Ovary (tissue), 10 donors: ENCODE measurements at regions of chr2 and their contacts with region 1.

Region 1: DNA sequence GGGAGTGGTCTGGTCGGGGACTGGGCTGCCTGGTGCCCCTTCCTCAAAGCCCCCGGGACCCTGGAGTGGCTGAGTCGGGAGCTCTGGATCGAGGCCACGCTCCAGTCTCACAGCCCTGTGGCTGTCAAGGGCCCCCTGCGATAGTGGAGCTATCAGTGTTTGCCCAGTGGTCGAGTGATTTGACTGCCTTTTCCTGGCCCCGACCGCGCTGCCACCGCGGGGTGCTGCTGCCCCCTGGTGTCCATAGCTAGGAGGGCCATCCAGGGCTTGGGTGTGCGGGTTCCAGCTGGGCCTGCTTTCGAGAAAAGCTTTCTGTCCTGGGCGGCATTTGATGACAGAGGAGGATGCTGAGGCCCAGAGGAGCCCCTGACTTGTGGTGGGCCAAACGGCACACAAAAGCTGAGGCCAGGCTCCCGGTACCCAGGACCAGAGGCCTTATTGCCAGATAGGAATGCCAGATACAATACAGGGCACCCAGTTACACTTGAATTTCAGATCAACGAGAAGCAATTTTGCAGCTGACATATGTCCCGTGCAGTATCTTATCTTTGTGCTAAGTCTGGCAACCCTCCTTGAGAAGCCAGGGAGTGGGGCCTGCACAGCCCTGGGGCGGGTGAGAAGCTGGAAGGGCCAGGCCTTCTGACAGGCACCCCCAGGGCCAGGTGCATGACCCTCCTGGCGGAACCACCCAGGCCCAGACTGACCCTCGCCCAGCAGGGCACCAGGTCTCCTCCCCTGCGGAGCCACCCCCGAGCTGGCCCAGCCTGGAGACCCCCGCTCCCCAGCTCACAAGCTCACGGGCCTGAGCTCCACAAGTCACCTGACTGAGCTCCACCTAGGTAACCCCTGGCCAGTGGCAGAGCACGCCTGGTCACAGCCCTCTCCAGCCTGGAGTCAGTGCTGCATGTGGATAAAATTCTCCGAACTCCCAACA is 13.0 kb downstream of the ODC1 start:
- DNase-seq: peak; percentile 60 to 86 (median 75)
- H3K4me3 ChIP-seq: no peak overlapping the region
- H3K27ac ChIP-seq: no peak overlapping the region
- H3K4me1 ChIP-seq: no peaks in the 10 kb centered on the region
- H3K27me3 ChIP-seq: no peaks in the 10 kb centered on the region
- CTCF ChIP-seq: peak; percentile 78 to 92 (median 87)
- EP300 ChIP-seq: no peak
- POLR2A ChIP-seq: no peak

Region 2: GRCh38 chr2:10072656-10073480 is 362.3 kb before region 1 on chr2:
- intact Hi-C with region 1: loop called in 1 of 4 experiments (anchors 5 kb)
- DNase-seq: peak; percentile 84 to 87 (median 84)
- H3K4me3 ChIP-seq: no peak overlapping the region
- H3K27ac ChIP-seq: no peak overlapping the region
- H3K4me1 ChIP-seq: peaks cover 2% of the 10 kb centered on the region
- H3K27me3 ChIP-seq: no peaks in the 10 kb centered on the region
- CTCF ChIP-seq: peak; percentile 77 to 86 (median 85)
- EP300 ChIP-seq: no peak
- POLR2A ChIP-seq: no peak

Region 3: DNA sequence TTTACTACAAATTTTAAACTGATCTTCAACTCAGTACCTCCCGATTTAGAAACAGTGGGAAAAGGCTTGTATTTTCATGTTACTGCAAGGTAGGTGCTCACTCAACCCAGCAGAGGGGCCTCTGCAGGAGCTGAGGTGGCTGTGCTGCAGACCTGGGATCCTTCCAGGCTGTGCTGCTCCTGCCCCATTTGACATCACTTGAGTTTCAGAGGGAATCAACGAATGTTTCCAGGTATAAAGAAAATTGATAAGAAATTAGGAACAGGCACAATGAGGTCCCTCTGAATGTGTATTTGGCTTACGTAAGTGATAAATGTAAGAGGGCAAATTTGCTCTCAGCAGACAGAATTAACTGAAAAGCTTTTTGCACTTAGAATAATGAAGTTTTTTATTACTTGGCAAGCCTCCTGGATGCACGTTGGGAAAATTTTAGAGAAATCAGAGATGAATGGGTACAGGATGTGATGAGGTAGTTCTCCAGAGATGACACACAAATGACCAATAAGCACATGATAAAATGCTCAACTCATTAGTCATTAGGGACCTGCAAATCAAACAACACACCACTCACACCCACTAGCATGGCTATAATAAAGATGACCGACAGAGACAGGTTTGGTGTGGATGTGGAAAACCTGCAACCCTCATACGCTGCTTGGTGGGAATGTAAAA is 140.6 kb after region 1 on chr2:
- intact Hi-C with region 1: no loop called
- DNase-seq: no peak
- H3K4me3 ChIP-seq: no peak overlapping the region
- H3K27ac ChIP-seq: no peak overlapping the region
- H3K4me1 ChIP-seq: no peaks in the 10 kb centered on the region
- H3K27me3 ChIP-seq: no peaks in the 10 kb centered on the region
- CTCF ChIP-seq: no peak
- EP300 ChIP-seq: no peak
- POLR2A ChIP-seq: no peak

Region 4: GRCh38 chr2:10659898-10660568 is 224.9 kb after region 1 on chr2:
- intact Hi-C with region 1: loop called in 1 of 4 experiments (anchors 10 kb)
- DNase-seq: peak in 1 of 5 donors; percentile 50
- H3K4me3 ChIP-seq: no peak overlapping the region
- H3K27ac ChIP-seq: no peak overlapping the region
- H3K4me1 ChIP-seq: no peaks in the 10 kb centered on the region
- H3K27me3 ChIP-seq: no peaks in the 10 kb centered on the region
- CTCF ChIP-seq: no peak
- EP300 ChIP-seq: no peak
- POLR2A ChIP-seq: no peak